Naive thymus-derived CD4-positive, alpha-beta T cell (primary cell): ENCODE measurements at regions of chr3 and their contacts with region 1.

Region 1: GRCh38 chr3:142279965-142280590 is 54.7 kb upstream of the GK5 start:
- DNase-seq: peak in 8 of 9 donors; percentile 18 to 64 (median 44)
- ATAC-seq: peak; percentile 71
- H3K4me3 ChIP-seq: no peak overlapping the region
- H3K4me3 Mint-ChIP-seq: no peak overlapping the region
- H3K27ac ChIP-seq: no peak overlapping the region
- H3K27ac Mint-ChIP-seq: no peak overlapping the region
- H3K4me1 ChIP-seq: peaks cover 0 to 8% of the 10 kb centered on the region in 2 donors
- H3K4me1 Mint-ChIP-seq: peaks cover 0 to 23% (median 0%) of the 10 kb centered on the region in 7 donors
- H3K27me3 ChIP-seq: no peaks in the 10 kb centered on the region
- H3K27me3 Mint-ChIP-seq: no peaks in the 10 kb centered on the region

Region 2: DNA sequence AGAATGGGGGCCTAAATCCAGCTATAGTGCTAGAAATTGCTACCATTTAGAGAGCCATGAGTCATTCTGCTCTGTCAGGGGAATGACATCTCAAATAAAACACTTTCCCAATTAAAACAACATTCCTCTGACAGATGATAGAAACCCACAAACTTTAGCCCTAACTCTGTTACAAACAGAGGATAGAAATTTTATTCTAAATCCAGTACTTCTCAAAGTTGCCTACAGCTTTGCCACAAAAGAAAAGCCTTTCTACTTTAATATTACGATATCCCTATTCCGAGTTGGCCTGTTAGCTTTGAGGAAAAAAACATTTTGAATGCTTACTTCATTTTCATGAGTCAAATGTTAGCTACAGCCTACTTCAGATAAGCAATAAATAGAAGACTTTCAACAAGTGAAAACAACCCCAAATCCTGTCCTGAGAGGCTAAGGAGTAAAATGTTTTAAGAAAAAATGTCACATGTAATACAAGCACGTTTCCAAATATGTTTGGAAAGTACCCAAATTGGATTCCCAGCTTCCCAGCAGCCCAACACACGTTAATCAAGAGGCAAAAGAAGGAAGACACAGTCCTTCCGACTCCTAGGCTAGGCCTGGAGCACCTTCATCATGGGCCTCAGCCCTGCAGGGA is 320.0 kb before region 1 on chr3:
- CTCF ChIA-PET with region 1: interaction called, 3 read pairs
- POLR2A ChIA-PET with region 1: no interaction called
- intact Hi-C with region 1: loop called in 1 of 2 experiments (anchors 1 kb)
- DNase-seq: no peak
- ATAC-seq: no peak
- H3K4me3 ChIP-seq: no peak overlapping the region
- H3K4me3 Mint-ChIP-seq: no peak overlapping the region
- H3K27ac ChIP-seq: no peak overlapping the region
- H3K27ac Mint-ChIP-seq: no peak overlapping the region
- H3K4me1 ChIP-seq: no peaks in the 10 kb centered on the region
- H3K4me1 Mint-ChIP-seq: peaks cover 0 to 5% (median 3%) of the 10 kb centered on the region in 7 donors
- H3K27me3 ChIP-seq: no peaks in the 10 kb centered on the region
- H3K27me3 Mint-ChIP-seq: no peaks in the 10 kb centered on the region

Region 3: GRCh38 chr3:142028243-142028777 is 251.8 kb before region 1 on chr3:
- CTCF ChIA-PET with region 1: no interaction called
- POLR2A ChIA-PET with region 1: no interaction called
- intact Hi-C with region 1: loop called in 1 of 2 experiments (anchors 5 kb)
- DNase-seq: peak in 7 of 9 donors; percentile 45 to 72 (median 63)
- ATAC-seq: peak; percentile 90
- H3K4me3 ChIP-seq: peak overlapping the region; percentile 47
- H3K4me3 Mint-ChIP-seq: peak overlapping the region; percentile 81 to 97 (median 90)
- H3K27ac ChIP-seq: peak overlapping the region; percentile 57
- H3K27ac Mint-ChIP-seq: peak overlapping the region; percentile 49 to 92 (median 82)
- H3K4me1 ChIP-seq: no peaks in the 10 kb centered on the region
- H3K4me1 Mint-ChIP-seq: peaks cover 13 to 50% (median 49%) of the 10 kb centered on the region in 7 donors
- H3K27me3 ChIP-seq: no peaks in the 10 kb centered on the region
- H3K27me3 Mint-ChIP-seq: no peaks in the 10 kb centered on the region

Region 4: GRCh38 chr3:142129516-142130171 is 150.4 kb before region 1 on chr3:
- CTCF ChIA-PET with region 1: interaction called, 30 read pairs
- POLR2A ChIA-PET with region 1: no interaction called
- intact Hi-C with region 1: loop called in 1 of 2 experiments (anchors 1 kb)
- DNase-seq: no peak
- ATAC-seq: no peak
- H3K4me3 ChIP-seq: no peak overlapping the region
- H3K4me3 Mint-ChIP-seq: no peak overlapping the region
- H3K27ac ChIP-seq: no peak overlapping the region
- H3K27ac Mint-ChIP-seq: peak overlapping the region in 2 of 9 donors; percentile 31 to 55
- H3K4me1 ChIP-seq: no peaks in the 10 kb centered on the region
- H3K4me1 Mint-ChIP-seq: peaks cover 3 to 28% (median 10%) of the 10 kb centered on the region in 7 donors
- H3K27me3 ChIP-seq: no peaks in the 10 kb centered on the region
- H3K27me3 Mint-ChIP-seq: no peaks in the 10 kb centered on the region

Region 5: GRCh38 chr3:142226484-142226883 is 53.6 kb before region 1 on chr3:
- CTCF ChIA-PET with region 1: interaction called, 4 read pairs
- POLR2A ChIA-PET with region 1: no interaction called
- intact Hi-C with region 1: loop called in 1 of 2 experiments (anchors 1 kb)
- DNase-seq: no peak
- ATAC-seq: no peak
- H3K4me3 ChIP-seq: no peak overlapping the region
- H3K4me3 Mint-ChIP-seq: peak overlapping the region; percentile 62 to 94 (median 82)
- H3K27ac ChIP-seq: no peak overlapping the region
- H3K27ac Mint-ChIP-seq: peak overlapping the region in 3 of 9 donors; percentile 18 to 45 (median 33)
- H3K4me1 ChIP-seq: no peaks in the 10 kb centered on the region
- H3K4me1 Mint-ChIP-seq: peaks cover 0 to 21% (median 16%) of the 10 kb centered on the region in 7 donors
- H3K27me3 ChIP-seq: no peaks in the 10 kb centered on the region
- H3K27me3 Mint-ChIP-seq: no peaks in the 10 kb centered on the region